ENCODE measurements at regions of chr2 and their contacts with region 1.

Region 1: GRCh38 chr2:2291500-2292260 is 39.4 kb downstream of the MYT1L start:
- DNase-seq: no peak
- ATAC-seq: peak; percentile 80 to 81

Region 2: GRCh38 chr2:1698188-1698945 is 593.3 kb before region 1 on chr2:
- intact Hi-C with region 1: no loop called
- DNase-seq: no peak
- ATAC-seq: peak; percentile 55 to 73

Region 3: GRCh38 chr2:1886405-1886992 is 405.2 kb before region 1 on chr2:
- intact Hi-C with region 1: loop called (anchors 2 to 10 kb)
- DNase-seq: peak; percentile 72
- ATAC-seq: peak in 1 of 2 donors; percentile 52

Region 4: DNA sequence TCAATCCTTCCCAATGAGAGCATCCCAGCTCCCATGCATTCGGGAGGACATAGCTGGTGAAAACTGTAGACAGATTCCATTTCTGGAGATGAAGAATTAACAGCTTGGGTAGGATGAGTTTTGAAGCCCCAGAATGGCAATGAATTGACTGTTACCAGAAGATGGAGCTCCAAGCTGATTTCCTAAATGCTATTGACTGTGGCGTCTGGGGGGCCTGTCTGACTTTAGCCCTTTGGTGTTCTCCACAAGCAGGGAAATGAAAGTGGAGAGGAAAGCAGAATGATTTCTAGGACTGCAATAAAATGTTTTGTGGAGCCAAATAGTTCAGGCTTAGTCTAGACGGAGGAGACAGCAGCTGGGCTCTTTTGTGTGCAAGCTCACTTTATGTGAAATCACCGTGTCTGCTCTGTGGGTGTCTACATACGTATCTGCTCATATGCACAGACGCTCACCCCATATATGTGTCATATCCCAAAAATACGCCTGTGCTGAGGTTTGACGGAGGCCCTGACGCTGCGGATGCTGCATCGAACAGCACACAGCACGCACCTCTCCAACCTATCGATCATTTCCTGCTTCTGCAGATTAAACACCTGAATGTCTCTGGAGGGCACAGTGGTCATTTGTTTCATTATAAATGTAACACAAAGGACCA is 381.0 kb before region 1 on chr2:
- intact Hi-C with region 1: loop called in 1 of 2 experiments (anchors 5 kb)
- DNase-seq: no peak
- ATAC-seq: peak in 1 of 2 donors; percentile 44

Region 5: DNA sequence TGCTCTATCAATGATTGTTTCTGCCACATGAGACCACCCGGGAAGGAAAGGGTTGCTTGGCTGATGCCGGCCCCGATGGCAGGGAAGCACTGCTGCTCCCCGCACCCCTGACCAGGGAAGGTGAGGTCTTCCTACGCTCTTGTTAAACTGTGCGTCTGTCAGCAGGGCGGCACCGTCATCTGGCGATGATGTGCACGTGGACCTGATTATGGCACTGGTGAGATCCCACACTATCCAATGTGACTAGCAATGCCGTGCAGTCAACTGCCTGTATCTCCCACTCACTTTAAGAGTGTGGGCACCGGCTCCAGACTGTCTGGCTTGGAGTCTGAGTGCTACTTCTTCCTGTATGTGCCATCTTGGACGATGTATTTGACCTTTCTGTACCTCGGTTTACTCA is 169.8 kb before region 1 on chr2:
- intact Hi-C with region 1: loop called (anchors 5 to 10 kb)
- DNase-seq: no peak
- ATAC-seq: no peak

Region 6: GRCh38 chr2:2413525-2413924 is 121.8 kb after region 1 on chr2:
- intact Hi-C with region 1: no loop called
- DNase-seq: no peak
- ATAC-seq: no peak

Region 7: DNA sequence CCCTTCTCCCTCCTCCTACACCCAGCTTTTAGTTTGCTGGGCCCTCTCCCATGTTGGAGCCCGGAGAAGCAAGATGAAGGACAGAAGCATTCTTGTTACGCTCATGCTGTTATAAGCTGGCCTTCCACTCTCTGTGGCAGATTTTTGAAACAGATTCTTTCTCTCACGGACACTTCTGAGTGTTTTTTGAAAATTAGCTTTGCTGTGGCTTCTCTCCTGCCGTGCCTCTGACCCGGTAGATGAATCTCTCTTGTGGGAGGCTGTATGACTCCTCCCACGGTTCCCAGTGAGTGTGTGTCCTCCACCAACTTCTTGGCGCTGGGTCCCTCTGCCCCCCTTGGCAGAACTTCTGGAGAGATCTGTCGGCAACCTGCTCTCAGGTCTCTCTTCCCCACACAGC is 308.7 kb after region 1 on chr2:
- intact Hi-C with region 1: no loop called
- DNase-seq: no peak
- ATAC-seq: no peak

Region 8: GRCh38 chr2:2960441-2961186 is 668.9 kb after region 1 on chr2:
- intact Hi-C with region 1: no loop called
- DNase-seq: no peak
- ATAC-seq: no peak

Measured in left cardiac atrium (tissue), 4 donors.